ENCODE measurements at regions of chr1 and their contacts with region 1.

Region 1: DNA sequence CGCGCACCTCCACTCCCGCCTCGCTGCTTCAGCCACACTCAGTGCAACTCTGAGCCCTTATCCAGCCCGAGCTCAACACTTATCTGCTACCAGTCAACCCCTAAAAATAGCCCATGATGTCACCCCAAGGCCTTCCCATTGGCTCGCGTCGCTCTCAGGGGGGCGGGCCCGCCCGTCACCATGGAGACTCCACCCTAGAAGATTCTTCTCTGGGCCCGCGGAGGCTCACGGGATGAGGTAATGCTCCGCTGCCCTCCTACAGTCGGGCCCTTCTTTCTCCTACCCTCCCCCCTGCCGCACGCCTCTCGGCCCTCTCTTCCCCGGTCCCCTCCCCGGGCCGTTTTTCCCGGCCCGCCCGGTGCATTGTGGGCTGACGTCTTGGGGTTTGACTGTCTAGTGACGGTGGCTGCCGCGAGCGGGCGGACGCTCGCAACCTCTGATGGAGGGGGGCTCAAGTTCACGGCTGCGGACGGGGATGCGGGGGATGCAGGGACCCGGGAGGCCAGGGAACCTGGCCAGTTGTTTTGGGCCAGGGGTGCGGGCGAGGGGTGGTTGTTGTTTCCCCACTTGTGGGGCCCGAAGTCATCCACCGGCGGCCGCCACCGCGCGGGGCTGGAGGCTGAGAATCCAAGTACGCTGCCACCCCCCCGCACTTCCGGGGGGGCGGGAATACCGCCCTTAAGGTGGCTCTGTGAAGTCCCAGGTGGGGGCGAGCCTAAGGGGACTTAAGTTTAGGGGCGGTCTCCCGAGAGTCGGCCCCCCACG is at the start of gene JUN:
- DNase-seq: peak; percentile 98
- CTCF ChIP-seq: no peak

Region 2: DNA sequence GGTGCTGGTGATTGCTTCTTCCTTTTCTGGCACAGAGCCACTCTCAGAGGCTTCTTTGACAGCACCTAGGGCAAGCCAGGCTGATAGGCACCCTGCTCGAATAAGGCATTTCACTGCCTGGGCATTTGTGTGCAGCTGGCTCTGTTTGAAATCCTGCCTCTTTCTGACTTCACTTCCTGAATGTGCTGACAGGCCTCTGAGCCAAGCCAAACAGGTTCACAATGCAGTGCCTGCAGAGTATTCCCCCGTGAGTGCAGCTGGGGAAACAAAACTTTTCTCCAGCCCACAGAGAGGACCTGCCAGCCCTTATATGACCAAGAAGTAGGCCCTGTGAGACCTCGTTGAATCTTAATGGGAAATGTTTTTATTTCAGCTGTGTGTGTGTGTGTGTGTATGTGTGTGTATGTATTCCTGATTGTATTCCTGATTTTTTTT is 10.8 kb before region 1 on chr1:
- CTCF ChIA-PET with region 1: interaction called, 3 read pairs
- POLR2A ChIA-PET with region 1: interaction called, 12 read pairs
- DNase-seq: peak; percentile 30
- CTCF ChIP-seq: no peak

Region 3: GRCh38 chr1:59013276-59013927 is 229.2 kb after region 1 on chr1:
- CTCF ChIA-PET with region 1: interaction called, 3 read pairs
- POLR2A ChIA-PET with region 1: interaction called, 10 read pairs
- DNase-seq: peak; percentile 30
- CTCF ChIP-seq: no peak